ENCODE measurements at regions of chr6 and their contacts with region 1.

Region 1: DNA sequence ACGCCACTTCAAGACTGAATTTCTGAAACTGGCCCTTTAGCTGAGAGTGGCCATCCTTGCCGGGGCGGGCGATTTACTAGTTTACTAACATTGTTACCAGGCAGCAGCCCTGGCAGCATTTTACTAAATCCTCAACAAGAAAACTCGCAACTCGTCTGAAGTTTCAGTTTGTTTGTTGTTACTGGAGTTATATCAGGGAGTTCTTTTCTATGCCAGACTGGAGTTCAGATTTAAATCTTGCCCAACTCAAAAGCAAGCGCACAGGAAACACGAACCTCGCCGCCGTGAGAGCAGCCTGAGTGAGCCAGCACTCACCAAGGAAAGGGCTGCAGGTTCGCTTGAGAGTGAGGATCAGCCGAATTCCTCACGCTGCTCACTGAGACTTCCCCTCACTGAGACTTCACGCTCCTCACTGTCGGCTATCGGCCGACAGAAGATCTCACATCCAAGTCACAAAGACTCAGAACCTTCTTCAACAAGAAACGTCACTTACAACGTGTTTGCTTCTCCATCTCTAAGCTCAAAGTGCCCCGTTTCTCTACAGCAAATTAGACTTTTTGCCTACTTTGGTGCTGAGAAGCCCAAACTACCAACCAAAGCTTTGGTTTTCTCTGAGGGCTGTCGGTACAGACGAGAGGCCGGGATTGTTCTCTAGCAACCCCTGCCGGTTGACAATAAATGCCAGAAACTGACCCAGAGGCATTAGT is 78.9 kb downstream of the OLIG3 start:
- H3K4me3 Mint-ChIP-seq: peak overlapping the region; percentile 78
- H3K27ac Mint-ChIP-seq: peak overlapping the region; percentile 79
- H3K4me1 Mint-ChIP-seq: peaks cover 14% of the 10 kb centered on the region
- H3K27me3 Mint-ChIP-seq: peaks cover 19% of the 10 kb centered on the region

Region 2: GRCh38 chr6:137076277-137077068 is 338.8 kb before region 1 on chr6:
- intact Hi-C with region 1: loop called (anchors 1 kb)
- H3K4me3 Mint-ChIP-seq: no peak overlapping the region
- H3K27ac Mint-ChIP-seq: no peak overlapping the region
- H3K4me1 Mint-ChIP-seq: no peaks in the 10 kb centered on the region
- H3K27me3 Mint-ChIP-seq: peaks cover 26% of the 10 kb centered on the region

Region 3: DNA sequence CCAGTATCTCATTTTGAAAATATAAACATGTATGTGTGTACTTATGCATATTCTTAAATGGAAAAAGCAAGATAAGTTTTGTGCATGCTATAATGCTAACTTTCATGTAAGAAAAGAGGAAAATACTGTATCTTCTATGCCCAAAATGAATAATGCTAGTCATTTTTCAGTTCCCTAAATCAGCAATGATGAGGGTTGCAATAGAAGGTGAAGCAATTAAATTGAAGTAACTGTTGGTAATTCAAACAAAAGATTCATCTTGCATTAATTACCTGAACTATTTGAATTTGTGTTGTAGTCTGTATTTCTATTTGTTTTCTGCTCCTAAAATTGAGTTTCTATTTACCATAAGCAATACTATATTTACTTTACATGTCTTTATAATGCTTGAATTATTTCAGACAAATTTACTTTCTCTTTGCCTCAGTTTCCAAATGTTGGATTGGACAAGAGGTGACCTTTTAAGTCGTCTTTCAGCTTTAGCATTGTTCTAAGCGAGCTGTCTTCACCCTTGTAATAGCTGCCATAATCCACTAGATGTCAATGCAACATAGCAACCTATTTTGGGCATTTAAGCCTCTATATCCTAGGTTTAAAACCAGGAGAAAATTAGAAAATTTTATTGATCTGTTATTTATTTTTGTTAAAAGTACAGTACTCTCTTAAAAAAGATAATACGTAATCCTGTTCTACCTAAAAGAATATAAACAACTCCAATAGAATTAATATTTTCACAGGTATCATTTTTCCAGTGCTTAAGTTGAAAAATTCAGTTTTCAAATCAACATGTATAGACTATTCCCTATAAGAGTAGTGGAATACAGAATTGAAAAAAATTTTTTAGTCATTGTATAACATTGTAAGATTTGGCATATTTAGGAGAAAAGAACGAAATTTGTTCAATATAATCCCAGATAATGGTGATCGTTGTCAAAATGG is 143.8 kb before region 1 on chr6:
- intact Hi-C with region 1: loop called (anchors 2 kb)
- H3K4me3 Mint-ChIP-seq: no peak overlapping the region
- H3K27ac Mint-ChIP-seq: no peak overlapping the region
- H3K4me1 Mint-ChIP-seq: peaks cover 11% of the 10 kb centered on the region
- H3K27me3 Mint-ChIP-seq: no peaks in the 10 kb centered on the region

Region 4: GRCh38 chr6:137341681-137342195 is 73.5 kb before region 1 on chr6:
- intact Hi-C with region 1: loop called (anchors 1 kb)
- H3K4me3 Mint-ChIP-seq: no peak overlapping the region
- H3K27ac Mint-ChIP-seq: no peak overlapping the region
- H3K4me1 Mint-ChIP-seq: peaks cover 11% of the 10 kb centered on the region
- H3K27me3 Mint-ChIP-seq: peaks cover 12% of the 10 kb centered on the region

Measured in dendritic cell treated with granulocyte-macrophage colony-stimulating factor and Interleukin-4, amounts not matched to agents 40 ng/mL and 50 ng/mL, for 4 days (primary cell).